ENCODE measurements at regions of chr13 and their contacts with region 1.

Region 1: GRCh38 chr13:39835253-39835652 is 179.8 kb downstream of the COG6 start:
- DNase-seq: no peak
- ATAC-seq: peak; percentile 60; the same call in 1 of the 2 replicates
- H3K4me3 ChIP-seq: peak overlapping the region in 1 of 2 experiments; percentile 18; a peak in 1 of 4 replicates
- H3K27ac ChIP-seq: no peak overlapping the region
- H3K4me1 ChIP-seq: no peaks in the 10 kb centered on the region
- H3K27me3 ChIP-seq: no peaks in the 10 kb centered on the region
- CTCF ChIP-seq: no peak

Region 2: DNA sequence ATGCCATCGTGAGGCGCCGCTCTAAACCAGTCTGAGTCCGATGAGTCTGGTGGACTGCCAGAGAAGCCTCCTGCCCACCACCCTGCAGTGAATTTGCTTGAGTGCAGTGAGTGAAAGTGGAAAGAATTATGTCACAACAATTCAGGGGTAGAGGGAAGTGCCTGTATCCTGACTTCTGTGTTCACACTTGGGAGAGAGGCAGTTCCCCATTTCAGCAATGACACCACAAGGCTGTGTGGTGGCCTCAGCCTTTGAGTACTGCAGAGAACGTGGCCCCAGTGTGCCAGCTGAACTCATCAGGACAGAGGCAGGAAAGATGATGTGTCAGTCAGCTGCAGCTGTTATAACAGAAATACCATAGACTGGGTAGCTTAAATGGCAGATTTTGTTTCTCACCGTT is 24.2 kb before region 1 on chr13:
- CTCF ChIA-PET with region 1: no interaction called
- POLR2A ChIA-PET with region 1: no interaction called
- in situ Hi-C with region 1: no loop called
- intact Hi-C with region 1: loop called (anchors 2 kb)
- DNase-seq: no peak
- ATAC-seq: no peak
- H3K4me3 ChIP-seq: no peak overlapping the region
- H3K27ac ChIP-seq: no peak overlapping the region
- H3K4me1 ChIP-seq: no peaks in the 10 kb centered on the region
- H3K27me3 ChIP-seq: no peaks in the 10 kb centered on the region
- CTCF ChIP-seq: no peak

Region 3: GRCh38 chr13:39881887-39882286 is 46.6 kb after region 1 on chr13:
- CTCF ChIA-PET with region 1: no interaction called
- POLR2A ChIA-PET with region 1: no interaction called
- in situ Hi-C with region 1: no loop called
- intact Hi-C with region 1: no loop called
- DNase-seq: no peak
- ATAC-seq: no peak
- H3K4me3 ChIP-seq: no peak overlapping the region
- H3K27ac ChIP-seq: no peak overlapping the region
- H3K4me1 ChIP-seq: peaks cover 4% of the 10 kb centered on the region; the same call in 1 of the 2 replicates
- H3K27me3 ChIP-seq: no peaks in the 10 kb centered on the region
- CTCF ChIP-seq: no peak

Region 4: DNA sequence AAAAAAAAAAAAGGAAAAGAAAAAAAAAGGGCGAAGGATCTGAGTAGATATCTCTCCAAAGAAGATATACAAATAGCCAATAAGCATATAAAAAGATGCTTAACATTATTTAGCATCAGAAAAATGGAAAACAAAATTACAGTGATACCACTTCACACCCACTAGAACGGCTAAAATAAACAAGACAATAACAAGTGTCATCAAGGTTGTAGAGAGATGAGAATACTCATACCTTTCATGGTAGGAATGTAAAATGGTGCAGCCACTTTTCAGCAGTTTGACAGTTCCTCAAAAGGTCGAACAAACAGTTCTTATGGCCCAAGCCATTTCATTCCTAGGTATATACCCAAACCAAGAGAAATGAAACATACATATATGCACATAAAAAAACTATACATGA is 797.7 kb after region 1 on chr13:
- CTCF ChIA-PET with region 1: no interaction called
- POLR2A ChIA-PET with region 1: interaction called, 13 read pairs
- in situ Hi-C with region 1: no loop called
- intact Hi-C with region 1: no loop called
- DNase-seq: no peak
- ATAC-seq: no peak
- H3K4me3 ChIP-seq: no peak overlapping the region
- H3K27ac ChIP-seq: no peak overlapping the region
- H3K4me1 ChIP-seq: no peaks in the 10 kb centered on the region
- H3K27me3 ChIP-seq: no peaks in the 10 kb centered on the region
- CTCF ChIP-seq: no peak